ENCODE measurements at regions of chr11 and their contacts with region 1.

Region 1: DNA sequence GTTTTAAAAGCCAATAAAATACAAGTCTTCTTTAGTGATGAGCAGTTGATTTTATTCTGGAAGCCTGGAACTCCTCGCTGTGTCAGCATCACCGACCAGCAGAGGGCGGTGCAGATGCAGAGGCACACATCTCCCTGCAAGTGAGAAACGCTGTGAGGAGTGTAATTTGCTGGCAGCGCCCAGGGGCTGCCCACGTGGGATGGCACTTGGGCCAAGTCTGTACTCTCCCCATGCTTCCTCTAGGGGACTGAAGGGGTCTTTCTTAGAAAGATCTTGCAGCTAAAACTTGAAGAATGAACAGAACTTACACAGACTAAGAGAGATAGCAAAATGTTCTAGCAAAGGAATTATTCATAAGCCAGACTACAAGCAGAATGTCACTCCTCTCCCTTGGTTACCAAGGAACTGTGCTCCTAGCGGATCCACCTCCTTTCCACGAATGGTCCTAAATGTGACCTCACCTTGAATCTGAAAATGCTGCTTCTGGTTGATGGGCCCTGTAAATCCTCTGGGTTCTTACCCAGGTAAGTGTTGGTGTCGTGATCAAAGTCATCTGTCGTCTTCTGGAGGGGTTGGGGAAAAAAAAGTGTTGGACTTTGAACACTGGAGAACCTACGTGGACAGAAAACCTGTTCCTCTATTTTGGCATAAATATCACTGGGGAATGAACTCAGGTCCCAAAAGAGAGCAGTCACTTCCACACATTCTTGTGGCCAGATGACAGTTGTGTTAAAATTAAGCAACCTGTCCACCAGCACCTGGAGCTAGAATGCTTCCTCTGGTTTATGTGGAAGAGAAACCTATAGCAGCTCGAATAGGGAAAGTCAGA is 31.8 kb downstream of the CNTF start:
- DNase-seq: peak; percentile 92
- H3K4me3 ChIP-seq: no peak overlapping the region
- H3K27ac ChIP-seq: no peak overlapping the region
- H3K4me1 ChIP-seq: peaks cover 0 to 5% (median 0%) of the 10 kb centered on the region in 6 donors
- H3K27me3 ChIP-seq: no peaks in the 10 kb centered on the region
- CTCF ChIP-seq: peak; percentile 57 to 88 (median 79)
- POLR2A ChIP-seq: no peak

Region 2: GRCh38 chr11:58788355-58789023 is 134.2 kb after region 1 on chr11:
- intact Hi-C with region 1: loop called (anchors 5 kb)
- DNase-seq: no peak
- H3K4me3 ChIP-seq: no peak overlapping the region
- H3K27ac ChIP-seq: no peak overlapping the region
- H3K4me1 ChIP-seq: no peaks in the 10 kb centered on the region
- H3K27me3 ChIP-seq: peaks cover 0 to 6% (median 0%) of the 10 kb centered on the region in 7 donors
- CTCF ChIP-seq: peak in 9 of 11 experiments; percentile 43 to 85 (median 63)
- POLR2A ChIP-seq: no peak

Region 3: DNA sequence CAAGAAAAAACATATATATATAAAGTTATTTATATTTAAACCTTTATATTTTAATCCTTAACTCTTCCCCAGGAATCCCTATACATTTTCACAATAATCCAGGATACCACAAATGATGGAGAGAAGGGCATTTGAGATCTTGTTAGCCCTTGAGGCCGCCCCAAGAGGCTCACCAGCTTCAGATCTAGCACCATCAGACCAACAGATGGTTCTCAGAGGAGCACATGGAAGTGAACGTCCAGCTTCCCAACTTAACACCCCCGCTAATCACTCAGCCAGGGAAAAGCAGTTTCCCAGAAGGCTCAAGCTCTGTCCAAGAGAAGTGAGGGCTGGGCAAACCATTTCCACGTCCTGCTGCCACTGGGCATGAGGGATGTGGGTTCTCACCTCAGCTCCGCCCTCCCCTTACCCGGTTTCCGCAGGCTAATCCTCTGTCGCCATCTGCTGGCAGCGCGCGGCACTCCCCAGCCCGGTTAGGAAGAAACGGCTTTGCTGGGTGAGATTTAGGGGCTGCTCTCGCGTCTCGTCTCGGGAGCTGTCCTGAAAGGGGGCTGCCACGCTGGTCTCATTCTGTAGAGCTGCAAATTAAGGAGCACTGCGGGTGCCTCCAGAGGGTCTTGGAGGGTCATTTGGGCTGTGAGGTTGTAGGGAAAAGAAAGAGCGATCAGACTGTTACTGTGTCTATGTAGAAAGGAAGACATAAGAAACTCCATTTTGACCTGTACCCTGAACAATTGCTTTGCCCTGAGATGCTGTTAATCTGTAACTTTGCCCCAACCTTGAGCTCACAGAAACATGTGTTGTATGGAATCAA is 481.6 kb after region 1 on chr11:
- intact Hi-C with region 1: loop called (anchors 10 kb)
- DNase-seq: peak; percentile 97
- H3K4me3 ChIP-seq: peak overlapping the region in 1 of 8 donors; percentile 42
- H3K27ac ChIP-seq: peak overlapping the region in 3 of 8 donors; percentile 18 to 45 (median 24)
- H3K4me1 ChIP-seq: peaks cover 7 to 56% (median 12%) of the 10 kb centered on the region in 6 donors
- H3K27me3 ChIP-seq: no peaks in the 10 kb centered on the region
- CTCF ChIP-seq: peak; percentile 94 to 99 (median 97)
- POLR2A ChIP-seq: no peak

Measured in spleen (tissue), 13 donors.